ENCODE measurements at regions of chr17 and their contacts with region 1.

Region 1: DNA sequence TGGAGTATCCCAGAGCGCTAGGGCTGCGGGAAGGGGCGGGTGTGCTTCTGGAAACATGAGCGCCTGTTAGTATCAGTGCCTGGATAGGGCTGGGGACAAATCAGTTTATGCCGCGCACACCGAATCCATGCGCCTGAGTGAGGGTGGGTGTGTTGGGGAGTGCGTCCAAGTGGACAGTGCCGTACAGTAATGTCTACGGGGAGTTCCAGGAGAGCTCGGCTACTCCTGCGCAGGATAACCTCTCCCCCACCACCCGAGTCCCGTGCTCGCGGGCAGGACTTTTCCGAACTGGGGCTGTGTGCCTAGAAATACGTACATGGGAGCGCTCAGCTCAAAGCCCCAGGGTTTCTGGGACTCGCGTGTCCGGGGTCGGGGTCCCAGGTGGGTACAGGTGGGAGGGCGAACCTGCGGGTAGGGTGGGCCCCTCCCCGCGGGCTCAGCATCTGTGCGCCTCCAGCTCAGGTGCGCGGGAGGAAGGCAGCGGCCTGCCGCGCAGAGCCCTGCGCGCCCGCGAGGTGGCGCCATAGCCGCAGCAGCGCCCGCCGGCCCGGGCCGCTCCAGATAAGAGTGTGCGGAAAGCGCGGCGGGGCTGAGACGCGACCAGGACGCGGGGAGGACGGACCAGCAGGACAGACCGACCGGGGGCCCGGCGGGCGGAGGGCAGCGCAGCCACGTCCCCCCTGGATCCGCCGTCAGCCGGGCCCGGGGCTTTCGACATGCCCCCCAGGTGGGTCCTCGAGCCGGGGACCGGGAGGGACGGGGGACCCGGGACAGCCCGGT is at the start of gene HIC1:
- DNase-seq: peak; percentile 84
- ATAC-seq: peak; percentile 52
- H3K4me3 Mint-ChIP-seq: peak within 1 kb of the TSS; percentile 74
- H3K27ac Mint-ChIP-seq: peak within 1 kb of the TSS; percentile 52
- H3K4me1 Mint-ChIP-seq: peaks cover 16% of the 10 kb centered on the region
- H3K27me3 Mint-ChIP-seq: peaks cover 9% of the 10 kb centered on the region
- CTCF ChIP-seq: peak; percentile 97
- total RNA-seq, gene HIC1: 35.1 TPM

Region 2: GRCh38 chr17:2064980-2065785 is 10.5 kb after region 1 on chr17:
- CTCF ChIA-PET with region 1: interaction called, 121 read pairs
- POLR2A ChIA-PET with region 1: interaction called, 46 read pairs
- intact Hi-C with region 1: no loop called
- DNase-seq: peak; percentile 89
- ATAC-seq: peak; percentile 77
- H3K4me3 Mint-ChIP-seq: no peak overlapping the region
- H3K27ac Mint-ChIP-seq: peak overlapping the region; percentile 41
- H3K4me1 Mint-ChIP-seq: peaks cover 38% of the 10 kb centered on the region
- H3K27me3 Mint-ChIP-seq: no peaks in the 10 kb centered on the region
- CTCF ChIP-seq: peak; percentile 71

Region 3: GRCh38 chr17:2075336-2076086 is 20.8 kb after region 1 on chr17:
- CTCF ChIA-PET with region 1: interaction called, 121 read pairs
- POLR2A ChIA-PET with region 1: interaction called, 46 read pairs
- intact Hi-C with region 1: no loop called
- DNase-seq: no peak
- ATAC-seq: peak; percentile 54
- H3K4me3 Mint-ChIP-seq: no peak overlapping the region
- H3K27ac Mint-ChIP-seq: peak overlapping the region; percentile 37
- H3K4me1 Mint-ChIP-seq: peaks cover 25% of the 10 kb centered on the region
- H3K27me3 Mint-ChIP-seq: no peaks in the 10 kb centered on the region
- CTCF ChIP-seq: no peak

Region 4: GRCh38 chr17:2144701-2145100 is 90.0 kb after region 1 on chr17:
- CTCF ChIA-PET with region 1: interaction called, 11 read pairs
- POLR2A ChIA-PET with region 1: interaction called, 3 read pairs
- intact Hi-C with region 1: no loop called
- DNase-seq: no peak
- ATAC-seq: no peak
- H3K4me3 Mint-ChIP-seq: no peak overlapping the region
- H3K27ac Mint-ChIP-seq: no peak overlapping the region
- H3K4me1 Mint-ChIP-seq: peaks cover 8% of the 10 kb centered on the region
- H3K27me3 Mint-ChIP-seq: no peaks in the 10 kb centered on the region
- CTCF ChIP-seq: no peak

Region 5: GRCh38 chr17:2215616-2216364 is 161.1 kb after region 1 on chr17:
- CTCF ChIA-PET with region 1: interaction called, 15 read pairs
- POLR2A ChIA-PET with region 1: interaction called, 5 read pairs
- intact Hi-C with region 1: no loop called
- DNase-seq: peak; percentile 87
- ATAC-seq: peak; percentile 97
- H3K4me3 Mint-ChIP-seq: peak overlapping the region; percentile 74
- H3K27ac Mint-ChIP-seq: peak overlapping the region; percentile 95
- H3K4me1 Mint-ChIP-seq: peaks cover 56% of the 10 kb centered on the region
- H3K27me3 Mint-ChIP-seq: no peaks in the 10 kb centered on the region
- CTCF ChIP-seq: no peak

Region 6: DNA sequence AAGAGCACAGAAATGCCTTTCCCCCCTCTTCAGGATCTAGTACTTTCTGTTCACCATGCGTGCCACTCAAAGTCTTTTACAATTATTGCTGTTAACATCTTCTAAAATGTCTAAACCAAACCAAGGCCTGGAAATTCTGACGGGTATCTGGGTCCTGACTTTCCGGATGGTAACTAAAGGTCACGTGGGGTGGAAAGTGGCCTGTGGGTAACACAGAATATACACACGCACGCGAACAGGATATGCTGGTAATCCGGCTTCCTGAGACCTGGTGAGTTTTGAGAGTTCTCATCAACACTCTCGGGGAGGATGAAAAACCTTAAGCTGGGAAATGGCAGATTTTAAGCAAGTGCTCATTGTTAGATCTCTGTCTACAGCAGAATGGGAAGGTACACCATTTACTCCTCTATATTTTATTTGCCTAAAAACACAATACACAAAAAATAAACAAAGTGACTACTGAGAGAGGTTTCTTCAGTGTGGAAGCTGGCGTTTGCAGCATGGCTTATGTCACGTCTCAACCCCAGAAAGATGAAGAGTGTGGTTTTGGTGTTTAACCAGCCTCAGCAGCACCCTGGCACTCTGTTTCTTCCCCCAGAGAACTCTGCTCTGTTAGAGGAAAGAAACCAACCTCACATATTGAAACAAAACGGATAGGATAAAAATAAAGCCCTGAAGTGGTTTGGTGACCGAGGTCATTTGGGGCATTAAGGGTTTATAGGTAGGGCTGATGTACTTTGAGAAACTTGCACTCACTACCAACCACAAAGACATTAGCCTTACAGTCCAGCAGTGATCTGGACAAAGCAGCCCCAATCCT is 211.6 kb after region 1 on chr17:
- CTCF ChIA-PET with region 1: interaction called, 9 read pairs
- POLR2A ChIA-PET with region 1: interaction called, 14 read pairs
- intact Hi-C with region 1: no loop called
- DNase-seq: peak; percentile 98
- ATAC-seq: peak; percentile 77
- H3K4me3 Mint-ChIP-seq: peak overlapping the region; percentile 79
- H3K27ac Mint-ChIP-seq: peak overlapping the region; percentile 98
- H3K4me1 Mint-ChIP-seq: peaks cover 82% of the 10 kb centered on the region
- H3K27me3 Mint-ChIP-seq: no peaks in the 10 kb centered on the region
- CTCF ChIP-seq: no peak

Measured in activated CD8-positive, alpha-beta T cell treated with anti-CD3 and anti-CD28 coated beads for 36 hours (primary cell).